ENCODE measurements at regions of chr16 and their contacts with region 1.

Region 1: GRCh38 chr16:13919683-13920509 is at the start of gene ERCC4:
- DNase-seq: peak; percentile 94
- H3K4me3 ChIP-seq: peak within 1 kb of the TSS; percentile 99
- CTCF ChIP-seq: peak; percentile 87

Region 2: GRCh38 chr16:13866073-13866472 is 53.8 kb before region 1 on chr16:
- CTCF ChIA-PET with region 1: interaction called, 37 read pairs
- POLR2A ChIA-PET with region 1: no interaction called
- DNase-seq: peak; percentile 12
- H3K4me3 ChIP-seq: no peak overlapping the region
- CTCF ChIP-seq: peak; percentile 80

Region 3: GRCh38 chr16:13935408-13935807 is 15.5 kb after region 1 on chr16:
- CTCF ChIA-PET with region 1: interaction called, 30 read pairs
- POLR2A ChIA-PET with region 1: no interaction called
- DNase-seq: no peak
- H3K4me3 ChIP-seq: no peak overlapping the region
- CTCF ChIP-seq: peak; percentile 21

Region 4: DNA sequence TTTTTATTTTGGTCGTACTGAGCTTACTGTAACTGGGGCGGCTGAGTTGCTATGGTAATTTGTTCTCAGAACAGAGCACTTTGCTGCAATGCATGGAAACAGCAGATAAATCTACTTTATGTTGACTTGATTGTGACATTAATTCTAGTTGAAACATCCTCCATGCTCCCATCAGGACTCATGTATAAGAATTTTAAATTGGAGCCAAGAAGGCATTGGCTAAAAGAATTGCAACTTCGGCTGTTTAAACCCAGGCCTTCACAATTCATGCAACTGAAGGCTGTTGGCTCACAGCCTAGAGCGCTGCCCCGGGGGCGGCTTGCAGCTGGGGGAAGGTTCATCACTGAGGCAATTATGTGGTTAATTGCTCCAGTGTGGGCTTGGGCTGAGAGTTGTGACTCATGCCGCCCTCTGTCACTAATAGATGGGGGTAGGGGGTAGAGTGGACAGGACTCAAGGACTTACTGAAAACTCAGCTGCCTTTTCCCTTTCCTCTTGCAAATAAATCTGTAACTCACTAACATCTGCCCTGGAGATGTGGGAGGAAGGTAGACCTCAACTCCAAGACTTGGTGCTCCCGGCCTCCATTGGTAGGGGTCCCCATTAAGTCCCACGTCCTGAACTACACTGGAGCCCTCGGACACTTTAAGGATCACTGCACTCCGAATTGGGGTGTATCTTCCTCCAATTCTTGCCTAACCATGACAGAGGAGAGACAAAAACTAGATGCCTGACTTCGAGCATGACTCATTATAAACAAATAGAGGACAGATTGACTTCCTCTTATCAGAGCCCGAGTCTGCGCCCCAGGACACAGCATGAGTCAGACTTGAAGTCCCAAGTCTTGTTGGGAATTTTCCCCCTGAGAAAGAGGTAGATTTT is 37.5 kb after region 1 on chr16:
- CTCF ChIA-PET with region 1: interaction called, 12 read pairs
- POLR2A ChIA-PET with region 1: no interaction called
- DNase-seq: peak; percentile 76
- H3K4me3 ChIP-seq: peak overlapping the region; percentile 52
- CTCF ChIP-seq: no peak

Region 5: GRCh38 chr16:14240219-14240843 is 320.4 kb after region 1 on chr16:
- CTCF ChIA-PET with region 1: interaction called, 33 read pairs
- POLR2A ChIA-PET with region 1: no interaction called
- DNase-seq: no peak
- H3K4me3 ChIP-seq: no peak overlapping the region
- CTCF ChIP-seq: no peak

Region 6: GRCh38 chr16:14285513-14286385 is 365.9 kb after region 1 on chr16:
- CTCF ChIA-PET with region 1: interaction called, 25 read pairs
- POLR2A ChIA-PET with region 1: no interaction called
- DNase-seq: peak; percentile 85
- H3K4me3 ChIP-seq: peak overlapping the region; percentile 84
- CTCF ChIP-seq: no peak